Common myeloid progenitor, CD34-positive (primary cell): ENCODE measurements at regions of chr12 and their contacts with region 1.

Region 1: GRCh38 chr12:65925626-65926025 is 101.3 kb downstream of the HMGA2 start:
- DNase-seq: peak in 2 of 3 donors; percentile 77 to 87
- H3K4me3 ChIP-seq: peak overlapping the region in 6 of 7 experiments; percentile 26 to 64 (median 53)
- H3K27ac ChIP-seq: peak overlapping the region in 1 of 2 experiments; percentile 58
- H3K4me1 ChIP-seq: peaks cover 37 to 73% (median 52%) of the 10 kb centered on the region in 4 experiments
- H3K27me3 ChIP-seq: no peaks in the 10 kb centered on the region

Region 2: DNA sequence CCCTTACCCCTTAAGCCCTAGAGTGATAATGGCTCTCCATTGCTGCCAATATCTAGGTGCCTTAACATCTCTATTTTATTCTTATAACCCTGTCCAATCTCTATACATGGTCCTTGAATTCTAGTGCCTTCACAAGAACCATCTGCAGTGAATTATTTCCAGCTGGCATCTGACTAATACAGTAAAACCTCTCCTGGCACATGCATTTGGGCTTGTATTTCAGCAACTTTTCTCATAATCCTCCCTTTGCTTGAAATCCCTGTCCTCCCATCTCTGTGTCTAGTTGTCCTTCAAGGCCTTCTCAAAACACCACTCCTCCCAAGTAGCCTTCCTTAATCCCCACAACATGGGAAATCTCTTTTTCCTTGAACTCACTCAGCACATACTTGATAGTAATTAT is 115.6 kb before region 1 on chr12:
- CTCF ChIA-PET with region 1: no interaction called
- POLR2A ChIA-PET with region 1: no interaction called
- DNase-seq: no peak
- H3K4me3 ChIP-seq: no peak overlapping the region
- H3K27ac ChIP-seq: no peak overlapping the region
- H3K4me1 ChIP-seq: no peaks in the 10 kb centered on the region
- H3K27me3 ChIP-seq: no peaks in the 10 kb centered on the region

Region 3: DNA sequence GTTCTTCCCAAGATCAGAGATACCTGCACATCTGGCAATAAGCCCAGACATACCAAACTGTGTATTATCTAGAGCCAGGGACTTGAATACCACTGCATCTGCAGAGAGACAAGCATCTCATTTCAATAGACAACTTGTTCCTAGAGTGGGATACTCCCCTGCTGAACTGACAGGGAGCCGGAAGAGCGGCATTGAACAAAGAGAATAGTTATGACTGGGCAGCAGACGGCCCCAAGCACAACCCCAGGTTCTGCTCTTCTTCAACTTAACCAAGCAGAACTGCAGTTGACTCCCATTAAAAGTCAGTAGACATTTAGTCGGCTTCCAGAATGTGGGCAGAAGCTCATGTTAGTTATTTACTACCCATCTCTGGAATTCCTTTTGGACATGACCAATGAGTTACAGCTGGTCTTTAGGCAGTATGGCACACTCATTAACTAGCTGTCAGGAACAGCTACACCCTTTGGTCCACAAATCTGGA is 11.6 kb after region 1 on chr12:
- CTCF ChIA-PET with region 1: interaction called, 13 read pairs
- POLR2A ChIA-PET with region 1: interaction called, 6 read pairs
- DNase-seq: no peak
- H3K4me3 ChIP-seq: no peak overlapping the region
- H3K27ac ChIP-seq: no peak overlapping the region
- H3K4me1 ChIP-seq: peaks cover 0 to 22% (median 14%) of the 10 kb centered on the region in 4 experiments
- H3K27me3 ChIP-seq: no peaks in the 10 kb centered on the region

Region 4: GRCh38 chr12:65962921-65963861 is 37.6 kb after region 1 on chr12:
- CTCF ChIA-PET with region 1: interaction called, 13 read pairs
- POLR2A ChIA-PET with region 1: interaction called, 3 read pairs
- DNase-seq: peak; percentile 71 to 83 (median 72)
- H3K4me3 ChIP-seq: peak overlapping the region in 4 of 7 experiments; percentile 8 to 61 (median 41)
- H3K27ac ChIP-seq: peak overlapping the region; percentile 47 to 78
- H3K4me1 ChIP-seq: peaks cover 15 to 72% (median 38%) of the 10 kb centered on the region in 4 experiments
- H3K27me3 ChIP-seq: no peaks in the 10 kb centered on the region

Region 5: GRCh38 chr12:66072135-66072534 is 146.5 kb after region 1 on chr12:
- CTCF ChIA-PET with region 1: no interaction called
- POLR2A ChIA-PET with region 1: no interaction called
- DNase-seq: peak; percentile 15 to 68 (median 61)
- H3K4me3 ChIP-seq: peak overlapping the region in 1 of 7 experiments; percentile 6
- H3K27ac ChIP-seq: no peak overlapping the region
- H3K4me1 ChIP-seq: peaks cover 8 to 20% (median 14%) of the 10 kb centered on the region in 4 experiments
- H3K27me3 ChIP-seq: no peaks in the 10 kb centered on the region